Natural killer cell (primary cell): ENCODE measurements at regions of chr11 and their contacts with region 1.

Region 1: DNA sequence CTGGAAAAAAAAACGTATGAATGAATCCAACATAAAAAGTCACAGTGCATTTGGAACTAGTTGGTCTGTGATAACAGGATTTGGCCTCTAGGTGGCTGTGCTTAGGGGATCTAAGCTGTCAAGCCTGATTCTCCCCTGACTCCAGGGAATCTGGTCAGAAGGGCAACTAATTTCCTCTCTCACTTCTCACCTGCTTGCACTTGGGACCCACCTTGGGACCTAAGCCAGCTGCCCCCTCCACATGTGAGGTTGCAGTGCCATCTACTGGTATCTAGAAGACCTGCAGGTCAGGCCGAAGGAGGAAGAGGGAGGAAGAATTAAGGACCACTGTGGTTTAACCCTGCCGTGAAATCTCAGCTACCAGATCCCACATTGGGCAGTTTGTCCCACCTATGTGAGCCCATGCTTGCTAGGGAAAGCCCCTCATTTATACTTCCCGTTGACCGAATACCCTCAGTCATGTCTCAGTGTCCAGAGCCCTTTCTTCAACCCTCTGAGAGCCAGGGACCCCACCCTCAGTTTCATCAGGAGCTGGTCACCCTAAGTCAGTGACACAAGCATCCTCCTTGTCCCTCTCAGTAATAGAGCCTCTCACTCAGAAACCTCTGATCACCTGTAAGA is 33.2 kb upstream of the CAVIN3 start:
- DNase-seq: peak; percentile 37 to 77
- ATAC-seq: peak; percentile 65 to 88 (median 80)
- H3K4me3 ChIP-seq: no peak overlapping the region
- H3K4me3 Mint-ChIP-seq: no peak overlapping the region
- H3K27ac ChIP-seq: no peak overlapping the region
- H3K27ac Mint-ChIP-seq: no peak overlapping the region
- H3K4me1 ChIP-seq: peaks cover 4% of the 10 kb centered on the region
- H3K4me1 Mint-ChIP-seq: no peaks in the 10 kb centered on the region
- H3K27me3 ChIP-seq: no peaks in the 10 kb centered on the region
- H3K27me3 Mint-ChIP-seq: peaks cover 6 to 12% of the 10 kb centered on the region in 2 donors
- CTCF ChIP-seq: peak; percentile 94

Region 2: DNA sequence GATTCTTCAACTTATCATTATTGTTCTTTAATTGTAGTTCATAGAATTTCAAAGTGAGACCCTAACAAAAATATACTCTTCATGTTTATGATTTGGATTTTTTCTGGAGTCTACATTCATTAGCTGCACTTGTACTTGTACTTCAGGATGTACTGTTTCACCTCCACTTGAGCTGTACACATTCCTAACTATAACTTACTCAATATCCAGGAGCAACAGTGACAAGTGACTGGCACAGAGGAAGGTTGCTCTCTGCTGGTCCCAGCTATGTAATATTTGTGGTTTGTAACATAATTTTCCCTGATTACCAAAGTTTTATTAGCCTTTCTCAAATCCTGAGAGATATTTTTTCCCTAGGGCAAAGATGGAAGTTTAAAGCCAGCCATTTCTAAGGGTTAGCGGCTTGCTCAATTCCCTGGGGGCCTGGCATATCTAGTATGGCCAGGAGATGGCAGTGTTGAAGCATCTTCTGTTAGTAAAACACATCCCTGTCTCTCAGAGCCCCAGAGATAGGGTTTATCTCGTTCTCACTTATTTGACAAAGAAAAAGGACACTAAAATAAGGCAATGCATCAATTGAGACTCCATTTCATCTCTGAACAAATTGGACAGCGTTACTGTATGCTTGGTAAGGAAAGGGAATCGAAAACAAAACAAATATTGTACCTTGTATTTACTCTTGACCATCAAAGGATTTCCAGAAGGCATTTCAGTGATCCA is 1229.5 kb before region 1 on chr11:
- intact Hi-C with region 1: loop called (anchors 5 kb)
- DNase-seq: peak in 1 of 2 donors; percentile 64
- ATAC-seq: peak; percentile 54 to 65 (median 59)
- H3K4me3 ChIP-seq: no peak overlapping the region
- H3K4me3 Mint-ChIP-seq: no peak overlapping the region
- H3K27ac ChIP-seq: no peak overlapping the region
- H3K27ac Mint-ChIP-seq: no peak overlapping the region
- H3K4me1 ChIP-seq: no peaks in the 10 kb centered on the region
- H3K4me1 Mint-ChIP-seq: peaks cover 0 to 5% of the 10 kb centered on the region in 2 donors
- H3K27me3 ChIP-seq: no peaks in the 10 kb centered on the region
- H3K27me3 Mint-ChIP-seq: peaks cover 3 to 18% of the 10 kb centered on the region in 2 donors
- CTCF ChIP-seq: peak; percentile 66

Region 3: GRCh38 chr11:6022956-6023355 is 330.5 kb before region 1 on chr11:
- intact Hi-C with region 1: loop called (anchors 1 kb)
- DNase-seq: peak in 1 of 2 donors; percentile 66
- ATAC-seq: peak; percentile 73 to 86 (median 76)
- H3K4me3 ChIP-seq: no peak overlapping the region
- H3K4me3 Mint-ChIP-seq: no peak overlapping the region
- H3K27ac ChIP-seq: no peak overlapping the region
- H3K27ac Mint-ChIP-seq: no peak overlapping the region
- H3K4me1 ChIP-seq: no peaks in the 10 kb centered on the region
- H3K4me1 Mint-ChIP-seq: no peaks in the 10 kb centered on the region
- H3K27me3 ChIP-seq: peaks cover 7% of the 10 kb centered on the region
- H3K27me3 Mint-ChIP-seq: peaks cover 30 to 68% of the 10 kb centered on the region in 2 donors
- CTCF ChIP-seq: peak; percentile 82